ENCODE measurements at regions of chr12 and their contacts with region 1.

Region 1: GRCh38 chr12:67268896-67269631 is at the start of gene CAND1:
- DNase-seq: peak; percentile 98
- ATAC-seq: peak; percentile 83
- H3K4me3 ChIP-seq: peak within 1 kb of the TSS; percentile 89 to 96 (median 95)
- H3K27ac ChIP-seq: peak within 1 kb of the TSS; percentile 96
- H3K4me1 ChIP-seq: peaks cover 36% of the 10 kb centered on the region
- H3K27me3 ChIP-seq: no peaks in the 10 kb centered on the region; a peak in 2 of 5 replicates
- CTCF ChIP-seq: peak; percentile 31; the same call in 1 of the 2 replicates
- EP300 ChIP-seq: no peak
- POLR2A ChIP-seq: peak; percentile 88
- RAD21 ChIP-seq: no peak
- total RNA-seq, gene CAND1: 138 and 241 TPM in 2 replicates

Region 2: GRCh38 chr12:67256649-67257048 is 12.4 kb before region 1 on chr12:
- CTCF ChIA-PET with region 1: no interaction called
- POLR2A ChIA-PET with region 1: interaction called, 10 read pairs
- in situ Hi-C with region 1: no loop called
- intact Hi-C with region 1: no loop called
- DNase-seq: no peak
- ATAC-seq: no peak
- H3K4me3 ChIP-seq: no peak overlapping the region
- H3K27ac ChIP-seq: no peak overlapping the region
- H3K4me1 ChIP-seq: no peaks in the 10 kb centered on the region
- H3K27me3 ChIP-seq: no peaks in the 10 kb centered on the region; a peak in 1 of 5 replicates
- CTCF ChIP-seq: no peak
- EP300 ChIP-seq: no peak
- POLR2A ChIP-seq: no peak
- RAD21 ChIP-seq: no peak

Region 3: DNA sequence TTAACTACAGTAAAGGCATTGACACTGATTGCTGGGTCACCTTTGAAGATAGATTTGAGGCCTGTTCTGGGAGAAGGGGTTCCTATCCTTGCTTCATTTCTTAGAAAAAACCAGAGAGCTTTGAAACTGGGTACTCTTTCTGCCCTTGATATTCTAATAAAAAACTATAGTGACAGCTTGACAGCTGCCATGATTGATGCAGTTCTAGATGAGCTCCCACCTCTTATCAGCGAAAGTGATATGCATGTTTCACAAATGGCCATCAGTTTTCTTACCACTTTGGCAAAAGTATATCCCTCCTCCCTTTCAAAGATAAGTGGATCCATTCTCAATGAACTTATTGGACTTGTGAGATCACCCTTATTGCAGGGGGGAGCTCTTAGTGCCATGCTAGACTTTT is 36.5 kb after region 1 on chr12:
- CTCF ChIA-PET with region 1: no interaction called
- POLR2A ChIA-PET with region 1: interaction called, 10 read pairs
- in situ Hi-C with region 1: no loop called
- intact Hi-C with region 1: no loop called
- DNase-seq: no peak
- ATAC-seq: no peak
- H3K4me3 ChIP-seq: no peak overlapping the region
- H3K27ac ChIP-seq: no peak overlapping the region
- H3K4me1 ChIP-seq: no peaks in the 10 kb centered on the region
- H3K27me3 ChIP-seq: no peaks in the 10 kb centered on the region
- CTCF ChIP-seq: no peak
- EP300 ChIP-seq: no peak
- POLR2A ChIP-seq: no peak
- RAD21 ChIP-seq: no peak

Measured in HepG2 (cell line).